A549 (cell line): ENCODE measurements at regions of chr11 and their contacts with region 1.

Region 1: DNA sequence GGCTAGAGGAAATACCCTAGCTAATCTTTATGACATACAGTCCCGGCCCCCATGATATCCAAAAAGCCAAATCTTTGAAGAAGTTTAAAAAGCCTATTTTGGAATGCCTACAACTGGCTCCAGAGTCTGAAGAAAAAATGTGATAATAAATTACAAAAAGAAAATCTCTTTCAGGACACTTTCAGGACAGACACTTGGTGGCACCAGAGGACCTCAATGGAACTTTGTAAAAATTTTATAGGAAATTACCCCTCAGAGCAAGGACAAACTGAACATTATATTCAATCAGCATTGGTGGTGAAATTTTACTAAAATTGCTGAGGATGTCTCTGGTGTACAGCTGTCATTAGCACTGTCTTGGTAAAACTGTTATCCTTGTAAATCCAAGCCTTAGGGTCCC is 81.0 kb downstream of the CCDC73 start:
- DNase-seq: peak in 1 of 2 experiments; percentile 30
- ATAC-seq: peak; percentile 34 to 43; a peak in 2 of 6 replicates
- H3K4me3 ChIP-seq: no peak overlapping the region
- H3K27ac ChIP-seq: no peak overlapping the region
- H3K4me1 ChIP-seq: 0 out of 3 replicates have a peak, but pooled peaks cover 3% of the 10 kb centered on the region
- CTCF ChIP-seq: peak; percentile 72
- EP300 ChIP-seq: no peak
- POLR2A ChIP-seq: no peak
- RAD21 ChIP-seq: peak; percentile 76 to 84

Region 2: DNA sequence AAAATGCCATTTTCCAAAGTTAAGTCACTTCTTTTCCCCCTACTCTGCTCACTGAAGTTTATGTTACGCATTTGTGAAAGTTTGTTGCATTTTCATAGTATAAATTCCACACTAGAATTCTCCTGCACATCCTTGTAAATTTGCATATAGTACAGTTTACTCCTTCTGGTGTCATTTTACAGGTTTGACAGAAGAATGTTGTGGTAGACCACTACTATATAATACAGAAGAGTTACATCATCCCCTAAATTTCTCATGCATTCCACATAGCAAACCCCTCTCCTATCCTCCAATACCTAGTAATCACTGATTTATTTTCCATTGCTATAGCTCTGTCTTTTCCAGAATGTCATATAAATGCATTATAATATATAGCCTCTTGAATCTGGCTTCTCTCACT is 16.5 kb after region 1 on chr11:
- CTCF ChIA-PET with region 1: interaction called, 23 read pairs
- POLR2A ChIA-PET with region 1: no interaction called
- DNase-seq: no peak
- ATAC-seq: no peak
- H3K4me3 ChIP-seq: no peak overlapping the region
- H3K27ac ChIP-seq: no peak overlapping the region
- H3K4me1 ChIP-seq: no peaks in the 10 kb centered on the region
- CTCF ChIP-seq: no peak
- EP300 ChIP-seq: no peak
- POLR2A ChIP-seq: no peak
- RAD21 ChIP-seq: no peak

Region 3: GRCh38 chr11:32792948-32793475 is 79.5 kb after region 1 on chr11:
- CTCF ChIA-PET with region 1: interaction called, 53 read pairs
- POLR2A ChIA-PET with region 1: no interaction called
- DNase-seq: peak; percentile 31
- ATAC-seq: peak; percentile 91 to 94
- H3K4me3 ChIP-seq: peak overlapping the region; percentile 18; the same call in 1 of the 3 replicates
- H3K27ac ChIP-seq: no peak overlapping the region
- H3K4me1 ChIP-seq: 0 out of 3 replicates have a peak, but pooled peaks cover 3% of the 10 kb centered on the region
- CTCF ChIP-seq: peak; percentile 95
- EP300 ChIP-seq: no peak
- POLR2A ChIP-seq: no peak
- RAD21 ChIP-seq: peak; percentile 82 to 90